Activated T-helper 1 cell treated with anti-CD3 and anti-CD28 coated beads, Interleukin-12 subunit alpha, Interleukin-12 subunit beta, Interleukin-2, Interleukin-4 antibody, amounts not matched to agents 30 ng/mL and 10 ng/mL and 1 ng/mL, durations not matched to agents 14 hours and 24 hours and 36 hours (primary cell): ENCODE measurements at regions of chr14 and their contacts with region 1.

Region 1: DNA sequence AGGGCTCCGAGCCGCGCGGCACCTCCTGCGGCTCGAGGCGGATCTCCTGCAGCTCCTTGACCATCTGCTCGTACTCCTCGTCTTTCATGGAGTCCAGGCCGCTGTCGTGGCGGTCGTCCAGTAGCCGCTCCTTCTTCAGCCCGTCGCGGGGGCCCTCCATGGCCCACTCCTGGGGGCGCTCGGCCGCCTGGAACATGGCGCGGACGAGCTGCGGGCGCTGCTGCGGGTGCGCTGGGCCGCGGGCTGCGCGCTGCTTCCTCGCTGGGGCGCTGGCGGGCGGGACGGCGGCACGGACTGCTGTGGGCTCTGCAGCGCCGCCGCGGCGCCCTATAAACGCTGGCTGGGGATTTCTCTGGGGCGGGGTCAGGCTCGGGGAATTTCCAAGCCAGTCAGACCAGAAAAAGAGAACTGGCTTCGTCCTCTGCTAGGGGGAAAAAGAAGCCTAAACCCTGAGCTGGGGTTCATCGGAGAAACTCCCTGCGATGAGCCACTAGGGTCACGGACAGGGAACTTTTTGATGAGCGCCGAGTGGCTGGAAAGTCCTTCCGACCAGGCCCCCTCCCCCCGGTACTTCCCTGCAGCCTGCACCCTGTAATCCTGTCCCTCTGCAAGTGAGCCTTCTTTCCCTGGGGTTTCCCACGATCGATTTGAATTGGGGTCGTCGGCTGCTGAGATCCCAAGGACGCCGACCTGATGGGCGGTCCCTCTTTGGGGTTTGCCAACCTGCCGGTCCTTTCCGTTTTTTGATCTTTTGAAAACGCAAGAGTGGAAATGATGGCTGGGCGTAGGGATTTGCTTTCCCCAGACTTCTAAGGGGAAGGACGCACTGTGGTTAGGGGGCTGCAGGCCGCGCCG is at the start of gene NFKBIA:
- DNase-seq: peak; percentile 95
- H3K4me3 Mint-ChIP-seq: peak within 1 kb of the TSS; percentile 100
- H3K27ac Mint-ChIP-seq: peak within 1 kb of the TSS; percentile 99
- H3K4me1 Mint-ChIP-seq: peaks cover 38% of the 10 kb centered on the region
- H3K27me3 Mint-ChIP-seq: no peaks in the 10 kb centered on the region
- total RNA-seq, gene NFKBIA: 591 and 599 TPM in 2 replicates

Region 2: DNA sequence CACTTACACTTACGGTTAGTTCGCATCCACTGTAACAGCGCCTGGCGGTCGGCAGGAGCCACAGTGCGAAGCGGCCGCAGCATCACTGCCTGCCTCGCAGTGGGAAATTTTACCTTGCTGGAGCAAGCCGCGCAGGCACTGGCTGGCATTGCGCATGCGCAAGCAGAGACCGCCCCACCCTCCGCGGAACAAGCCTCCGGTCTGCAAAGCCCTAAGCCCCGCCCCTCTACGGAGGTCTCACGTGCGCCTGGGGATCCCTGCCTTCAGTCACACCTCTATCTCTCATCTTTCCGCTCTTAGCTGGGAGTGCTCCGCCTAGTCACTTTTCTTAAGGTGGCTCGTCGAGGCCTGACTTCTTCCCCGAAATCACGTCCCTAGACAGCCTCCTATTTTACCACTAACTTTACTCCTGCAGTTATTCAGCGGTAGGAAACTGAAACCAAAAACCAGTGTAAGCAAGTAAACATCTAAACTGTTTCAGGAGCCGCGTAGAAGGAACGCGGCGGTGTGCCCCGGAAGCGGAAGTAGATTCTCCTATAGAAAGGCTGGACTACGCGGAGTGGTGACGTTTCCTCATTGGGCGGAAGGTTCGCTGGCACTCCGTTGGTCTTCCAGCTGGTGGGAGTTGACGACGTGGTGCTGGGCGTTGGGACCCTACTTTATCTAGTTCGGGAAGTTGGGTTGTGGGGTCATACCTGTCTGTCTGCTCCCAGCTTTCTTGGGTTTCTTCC is 422.1 kb before region 1 on chr14 and contains the start of gene SRP54:
- intact Hi-C with region 1: loop called (anchors 1 kb)
- DNase-seq: peak; percentile 100
- H3K4me3 Mint-ChIP-seq: no peak within 1 kb of the TSS
- H3K27ac Mint-ChIP-seq: no peak within 1 kb of the TSS
- H3K4me1 Mint-ChIP-seq: peaks cover 6% of the 10 kb centered on the region
- H3K27me3 Mint-ChIP-seq: no peaks in the 10 kb centered on the region
- total RNA-seq, gene SRP54: 76.1 and 76.2 TPM in 2 replicates

Region 3: DNA sequence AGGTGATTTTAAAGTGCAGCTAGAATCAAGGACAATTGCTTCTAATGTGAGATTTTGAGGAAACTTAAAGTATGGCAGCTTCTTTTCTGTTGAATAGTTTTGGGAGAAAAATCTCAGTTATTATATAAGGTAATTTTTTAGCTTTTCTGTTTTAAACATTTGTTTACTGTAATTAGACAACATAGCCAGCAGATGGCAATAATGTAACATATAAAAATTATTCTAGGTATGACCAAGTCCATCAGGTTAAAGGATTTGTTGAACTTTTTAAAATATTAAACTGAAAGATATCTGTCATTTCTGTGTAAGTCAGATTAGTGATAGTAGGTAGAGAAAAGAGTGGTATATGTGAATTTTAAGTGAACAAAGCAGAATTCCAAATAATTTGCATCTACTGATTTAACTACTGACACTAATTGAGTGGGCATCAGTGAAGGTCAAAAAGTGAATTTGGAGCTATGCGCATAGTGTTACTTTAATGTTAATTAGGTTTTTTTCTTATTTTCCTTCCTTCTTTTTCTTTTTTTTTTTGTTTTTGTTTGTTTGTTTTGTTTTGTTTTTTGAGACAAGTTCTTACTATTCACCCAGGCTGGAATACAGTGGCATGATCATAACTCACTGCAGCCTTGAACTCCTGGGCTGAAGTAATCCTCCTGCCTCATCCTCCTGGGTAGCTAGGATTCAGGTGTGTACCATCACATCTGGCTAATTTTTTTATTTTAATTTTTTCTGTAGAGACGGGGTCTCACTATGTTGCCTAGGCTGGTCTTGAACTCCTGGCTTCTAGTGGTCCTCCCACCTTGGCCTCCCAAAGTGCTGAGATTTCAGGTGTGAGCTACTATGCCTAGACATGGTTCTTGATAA is 263.7 kb before region 1 on chr14:
- intact Hi-C with region 1: loop called (anchors 1 kb)
- DNase-seq: no peak
- H3K4me3 Mint-ChIP-seq: no peak overlapping the region
- H3K27ac Mint-ChIP-seq: no peak overlapping the region
- H3K4me1 Mint-ChIP-seq: peaks cover 29% of the 10 kb centered on the region
- H3K27me3 Mint-ChIP-seq: no peaks in the 10 kb centered on the region

Region 4: GRCh38 chr14:35229495-35230089 is 175.1 kb before region 1 on chr14:
- intact Hi-C with region 1: loop called (anchors 1 kb)
- DNase-seq: no peak
- H3K4me3 Mint-ChIP-seq: no peak overlapping the region
- H3K27ac Mint-ChIP-seq: no peak overlapping the region
- H3K4me1 Mint-ChIP-seq: peaks cover 42% of the 10 kb centered on the region
- H3K27me3 Mint-ChIP-seq: no peaks in the 10 kb centered on the region

Region 5: GRCh38 chr14:35292051-35292769 is 112.5 kb before region 1 on chr14 and contains the start of gene PSMA6:
- intact Hi-C with region 1: loop called (anchors 1 kb)
- DNase-seq: peak; percentile 99
- H3K4me3 Mint-ChIP-seq: peak within 1 kb of the TSS; percentile 99
- H3K27ac Mint-ChIP-seq: peak within 1 kb of the TSS; percentile 94
- H3K4me1 Mint-ChIP-seq: peaks cover 56% of the 10 kb centered on the region
- H3K27me3 Mint-ChIP-seq: no peaks in the 10 kb centered on the region
- total RNA-seq, gene PSMA6: 475 and 479 TPM in 2 replicates

Region 6: GRCh38 chr14:35365130-35366055 is 39.3 kb before region 1 on chr14:
- intact Hi-C with region 1: loop called (anchors 1 kb)
- DNase-seq: peak; percentile 52
- H3K4me3 Mint-ChIP-seq: peak overlapping the region; percentile 47
- H3K27ac Mint-ChIP-seq: peak overlapping the region; percentile 93
- H3K4me1 Mint-ChIP-seq: peaks cover 43% of the 10 kb centered on the region
- H3K27me3 Mint-ChIP-seq: no peaks in the 10 kb centered on the region